ENCODE measurements at regions of chr17 and their contacts with region 1.

Region 1: GRCh38 chr17:61420052-61420451 is 20.4 kb downstream of the TBX2 start:
- DNase-seq: no peak
- H3K4me3 ChIP-seq: no peak overlapping the region
- H3K27ac ChIP-seq: no peak overlapping the region
- H3K4me1 ChIP-seq: peaks cover 6% of the 10 kb centered on the region
- H3K27me3 ChIP-seq: no peaks in the 10 kb centered on the region
- CTCF ChIP-seq: no peak

Region 2: GRCh38 chr17:60685437-60685836 is 734.6 kb before region 1 on chr17:
- CTCF ChIA-PET with region 1: interaction called, 14 read pairs
- dilution Hi-C with region 1: no loop called
- in situ Hi-C with region 1: no loop called
- intact Hi-C with region 1: no loop called
- DNase-seq: no peak
- H3K4me3 ChIP-seq: no peak overlapping the region
- H3K27ac ChIP-seq: no peak overlapping the region
- H3K4me1 ChIP-seq: peaks cover 8% of the 10 kb centered on the region
- H3K27me3 ChIP-seq: no peaks in the 10 kb centered on the region
- CTCF ChIP-seq: no peak

Measured in mammary epithelial cell (primary cell).